ENCODE measurements at regions of chr17 and their contacts with region 1.

Region 1: GRCh38 chr17:32331243-32332040 is 10.5 kb downstream of the C17orf75 start:
- DNase-seq: no peak
- ATAC-seq: peak; percentile 90
- H3K4me3 Mint-ChIP-seq: peak overlapping the region; percentile 74
- H3K27ac Mint-ChIP-seq: peak overlapping the region; percentile 81
- H3K4me1 Mint-ChIP-seq: peaks cover 46% of the 10 kb centered on the region
- H3K27me3 Mint-ChIP-seq: no peaks in the 10 kb centered on the region

Region 2: GRCh38 chr17:32311028-32311536 is 20.4 kb before region 1 on chr17:
- POLR2A ChIA-PET with region 1: no interaction called
- DNase-seq: no peak
- ATAC-seq: no peak
- H3K4me3 Mint-ChIP-seq: no peak overlapping the region
- H3K27ac Mint-ChIP-seq: no peak overlapping the region
- H3K4me1 Mint-ChIP-seq: peaks cover 2% of the 10 kb centered on the region
- H3K27me3 Mint-ChIP-seq: peaks cover 37% of the 10 kb centered on the region

Region 3: GRCh38 chr17:32349854-32350665 is 18.6 kb after region 1 on chr17 and contains the start of gene ZNF207:
- POLR2A ChIA-PET with region 1: interaction called, 21 read pairs
- DNase-seq: peak; percentile 93
- ATAC-seq: peak; percentile 95
- H3K4me3 Mint-ChIP-seq: peak within 1 kb of the TSS; percentile 91
- H3K27ac Mint-ChIP-seq: peak within 1 kb of the TSS; percentile 99
- H3K4me1 Mint-ChIP-seq: peaks cover 22% of the 10 kb centered on the region
- H3K27me3 Mint-ChIP-seq: no peaks in the 10 kb centered on the region
- total RNA-seq, gene ZNF207: 264 to 274 TPM